A673 (cell line): ENCODE measurements at regions of chr20 and their contacts with region 1.

Region 1: GRCh38 chr20:52312132-52312729 is 120.7 kb upstream of the ZFP64 start:
- DNase-seq: peak; percentile 88
- H3K4me3 ChIP-seq: no peak overlapping the region
- H3K27ac ChIP-seq: peak overlapping the region; percentile 15
- H3K4me1 ChIP-seq: peaks cover 28% of the 10 kb centered on the region
- H3K27me3 ChIP-seq: no peaks in the 10 kb centered on the region
- CTCF ChIP-seq: peak; percentile 87

Region 2: GRCh38 chr20:51172974-51173397 is 1139.2 kb before region 1 on chr20:
- CTCF ChIA-PET with region 1: no interaction called
- POLR2A ChIA-PET with region 1: no interaction called
- intact Hi-C with region 1: no loop called
- DNase-seq: peak; percentile 10
- H3K4me3 ChIP-seq: no peak overlapping the region
- H3K27ac ChIP-seq: no peak overlapping the region
- H3K4me1 ChIP-seq: no peaks in the 10 kb centered on the region
- H3K27me3 ChIP-seq: no peaks in the 10 kb centered on the region
- CTCF ChIP-seq: 0 out of 2 replicates have a peak, but pooled peaks have one; percentile 10

Region 3: GRCh38 chr20:51678026-51678697 is 634.1 kb before region 1 on chr20:
- CTCF ChIA-PET with region 1: no interaction called
- POLR2A ChIA-PET with region 1: no interaction called
- intact Hi-C with region 1: no loop called
- DNase-seq: no peak
- H3K4me3 ChIP-seq: no peak overlapping the region
- H3K27ac ChIP-seq: peak overlapping the region; percentile 56
- H3K4me1 ChIP-seq: peaks cover 14% of the 10 kb centered on the region
- H3K27me3 ChIP-seq: no peaks in the 10 kb centered on the region
- CTCF ChIP-seq: no peak

Region 4: GRCh38 chr20:52242237-52243230 is 69.7 kb before region 1 on chr20:
- CTCF ChIA-PET with region 1: no interaction called
- POLR2A ChIA-PET with region 1: no interaction called
- intact Hi-C with region 1: loop called (anchors 5 kb)
- DNase-seq: peak; percentile 68
- H3K4me3 ChIP-seq: no peak overlapping the region
- H3K27ac ChIP-seq: peak overlapping the region; percentile 4
- H3K4me1 ChIP-seq: peaks cover 19% of the 10 kb centered on the region
- H3K27me3 ChIP-seq: no peaks in the 10 kb centered on the region
- CTCF ChIP-seq: peak; percentile 63

Region 5: GRCh38 chr20:52379723-52380336 is 67.6 kb after region 1 on chr20:
- CTCF ChIA-PET with region 1: interaction called, 8 read pairs
- POLR2A ChIA-PET with region 1: no interaction called
- intact Hi-C with region 1: loop called (anchors 2 kb)
- DNase-seq: peak; percentile 55
- H3K4me3 ChIP-seq: no peak overlapping the region
- H3K27ac ChIP-seq: no peak overlapping the region
- H3K4me1 ChIP-seq: no peaks in the 10 kb centered on the region
- H3K27me3 ChIP-seq: no peaks in the 10 kb centered on the region
- CTCF ChIP-seq: peak; percentile 98

Region 6: DNA sequence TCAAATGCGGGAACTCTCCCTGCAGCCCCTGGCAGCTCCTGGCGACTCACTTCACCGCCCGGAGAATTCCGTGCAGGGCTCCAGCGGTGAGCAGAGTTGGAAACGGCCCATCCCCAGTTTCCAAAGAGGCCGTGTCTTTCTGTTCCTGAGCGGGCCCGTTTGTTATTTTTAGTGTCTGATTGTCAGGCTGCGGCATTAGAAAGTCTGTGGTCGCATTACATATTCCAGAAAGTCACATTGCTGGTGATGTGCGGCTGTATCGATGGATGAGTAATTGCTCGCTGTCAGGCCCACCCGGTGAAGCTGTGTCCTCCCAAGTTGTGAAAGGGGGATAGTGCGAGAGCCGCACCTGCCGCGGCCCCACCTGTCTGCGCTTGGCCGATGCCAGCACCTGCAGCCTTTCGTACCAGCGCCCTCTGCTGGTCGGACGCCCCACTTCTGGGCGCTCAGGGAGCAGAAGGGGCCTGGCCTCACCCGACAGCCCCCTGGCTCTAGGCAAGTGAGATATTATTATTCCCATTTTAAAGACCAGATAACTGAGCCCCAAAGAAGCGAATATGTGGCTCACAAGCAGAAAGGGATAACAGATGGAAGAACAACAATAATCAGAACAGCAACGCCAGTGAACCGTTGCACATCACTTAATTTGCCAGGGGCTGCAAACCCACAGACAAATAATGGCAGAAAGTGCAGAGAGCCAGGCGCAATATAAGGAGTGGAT is 904.8 kb after region 1 on chr20:
- CTCF ChIA-PET with region 1: no interaction called
- POLR2A ChIA-PET with region 1: no interaction called
- intact Hi-C with region 1: loop called (anchors 5 kb)
- DNase-seq: peak; percentile 52
- H3K4me3 ChIP-seq: no peak overlapping the region
- H3K27ac ChIP-seq: no peak overlapping the region
- H3K4me1 ChIP-seq: peaks cover 3% of the 10 kb centered on the region
- H3K27me3 ChIP-seq: no peaks in the 10 kb centered on the region
- CTCF ChIP-seq: peak; percentile 98

Region 7: GRCh38 chr20:53547664-53548239 is 1235.5 kb after region 1 on chr20:
- CTCF ChIA-PET with region 1: interaction called, 17 read pairs
- POLR2A ChIA-PET with region 1: interaction called, 5 read pairs
- intact Hi-C with region 1: loop called (anchors 2 kb)
- DNase-seq: peak; percentile 87
- H3K4me3 ChIP-seq: no peak overlapping the region
- H3K27ac ChIP-seq: no peak overlapping the region
- H3K4me1 ChIP-seq: peaks cover 9% of the 10 kb centered on the region
- H3K27me3 ChIP-seq: no peaks in the 10 kb centered on the region
- CTCF ChIP-seq: peak; percentile 90